Breast epithelium (tissue), 4 donors: ENCODE measurements at regions of chr7 and their contacts with region 1.

Region 1: GRCh38 chr7:66399566-66399965 is 194.4 kb downstream of the TPST1 start:
- DNase-seq: no peak
- H3K4me3 ChIP-seq: no peak overlapping the region
- H3K27ac ChIP-seq: no peak overlapping the region
- H3K4me1 ChIP-seq: no peaks in the 10 kb centered on the region
- H3K27me3 ChIP-seq: no peaks in the 10 kb centered on the region
- CTCF ChIP-seq: no peak
- POLR2A ChIP-seq: no peak

Region 2: DNA sequence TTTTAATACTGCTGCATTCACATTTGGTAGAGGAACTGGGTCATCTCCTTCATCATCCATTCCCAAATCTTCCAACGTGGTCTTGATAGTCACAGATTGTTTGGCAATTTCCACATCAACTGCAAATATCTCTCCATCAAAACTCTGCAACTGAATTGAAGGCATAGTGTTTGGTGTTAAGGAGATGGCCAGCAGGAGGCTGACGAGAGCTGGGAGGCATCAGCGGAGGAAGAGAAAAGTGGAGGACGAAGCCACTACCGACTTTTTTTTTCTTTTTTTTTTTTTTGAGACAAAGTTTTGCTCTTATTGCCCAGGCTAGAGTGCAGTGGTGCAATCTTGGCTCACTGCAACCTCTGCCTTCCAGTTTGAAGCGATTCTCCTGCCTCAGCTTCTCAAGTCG is 24.2 kb after region 1 on chr7:
- intact Hi-C with region 1: loop called (anchors 2 kb)
- DNase-seq: no peak
- H3K4me3 ChIP-seq: no peak overlapping the region
- H3K27ac ChIP-seq: no peak overlapping the region
- H3K4me1 ChIP-seq: no peaks in the 10 kb centered on the region
- H3K27me3 ChIP-seq: no peaks in the 10 kb centered on the region
- CTCF ChIP-seq: no peak
- POLR2A ChIP-seq: no peak

Region 3: GRCh38 chr7:68107261-68107660 is 1707.7 kb after region 1 on chr7:
- intact Hi-C with region 1: no loop called
- DNase-seq: no peak
- H3K4me3 ChIP-seq: no peak overlapping the region
- H3K27ac ChIP-seq: no peak overlapping the region
- H3K4me1 ChIP-seq: no peaks in the 10 kb centered on the region
- H3K27me3 ChIP-seq: no peaks in the 10 kb centered on the region
- CTCF ChIP-seq: no peak
- POLR2A ChIP-seq: no peak